HCT116 (cell line): ENCODE measurements at regions of chr1 and their contacts with region 1.

Region 1: GRCh38 chr1:108559215-108560186 is at the start of gene EEIG2:
- DNase-seq: peak; percentile 69
- ATAC-seq: peak; percentile 83
- H3K4me3 ChIP-seq: peak within 1 kb of the TSS; percentile 64 to 70
- H3K27ac ChIP-seq: peak within 1 kb of the TSS; percentile 48; the same call in 1 of the 2 replicates
- H3K4me1 ChIP-seq: peaks cover 11 to 23% of the 10 kb centered on the region in 2 experiments
- H3K27me3 ChIP-seq: no peaks in the 10 kb centered on the region
- CTCF ChIP-seq: peak; percentile 32 to 63 (median 62); a peak in 5 of 6 replicates
- POLR2A ChIP-seq: no peak
- RAD21 ChIP-seq: no peak
- total RNA-seq, gene EEIG2: 16.0 TPM

Region 2: DNA sequence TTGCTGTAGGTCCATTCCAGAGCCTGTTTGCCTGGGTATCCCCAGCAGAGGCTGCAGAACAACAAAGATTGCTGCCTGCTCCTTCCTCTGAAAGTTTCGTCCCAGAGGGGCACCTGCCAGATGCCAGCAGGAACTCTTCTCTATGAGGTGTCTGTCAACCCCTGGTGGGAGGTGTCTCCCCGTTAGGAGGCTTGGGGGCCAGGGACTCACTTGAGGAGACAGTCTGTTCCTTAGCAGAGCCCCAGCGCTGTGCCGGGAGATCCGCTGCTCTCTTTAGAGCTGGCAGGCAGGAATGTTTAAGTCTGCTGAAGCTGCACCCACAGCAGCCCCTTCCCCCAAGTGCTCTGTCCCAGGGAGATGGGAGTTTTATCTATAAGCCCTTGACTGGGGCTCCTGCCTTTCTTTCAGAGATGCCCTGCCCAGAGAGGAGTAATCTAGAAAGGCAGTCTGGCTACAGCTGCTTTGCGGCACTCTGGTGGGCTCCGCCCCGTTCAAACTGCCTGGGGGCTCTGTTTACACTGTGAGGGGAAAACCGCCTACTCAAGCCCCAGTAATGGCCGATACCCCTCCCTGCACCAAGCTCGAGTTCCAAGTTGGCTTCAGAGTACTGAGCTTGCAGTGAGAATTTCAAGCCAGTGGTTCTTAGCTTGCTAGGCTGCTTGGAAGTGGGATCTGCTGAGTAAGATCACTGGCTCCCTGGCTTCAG is 350.6 kb before region 1 on chr1:
- CTCF ChIA-PET with region 1: no interaction called
- POLR2A ChIA-PET with region 1: no interaction called
- RAD21 ChIA-PET with region 1: no interaction called
- intact Hi-C with region 1: loop called (anchors 5 kb)
- DNase-seq: no peak
- ATAC-seq: no peak
- H3K4me3 ChIP-seq: no peak overlapping the region
- H3K27ac ChIP-seq: no peak overlapping the region
- H3K4me1 ChIP-seq: no peaks in the 10 kb centered on the region
- H3K27me3 ChIP-seq: peaks cover 9% of the 10 kb centered on the region; the same call in 1 of the 2 replicates
- CTCF ChIP-seq: no peak
- POLR2A ChIP-seq: no peak
- RAD21 ChIP-seq: no peak

Region 3: GRCh38 chr1:108575375-108575774 is 15.9 kb after region 1 on chr1:
- CTCF ChIA-PET with region 1: interaction called, 13 read pairs
- POLR2A ChIA-PET with region 1: no interaction called
- RAD21 ChIA-PET with region 1: no interaction called
- intact Hi-C with region 1: no loop called
- DNase-seq: no peak
- ATAC-seq: no peak
- H3K4me3 ChIP-seq: no peak overlapping the region
- H3K27ac ChIP-seq: no peak overlapping the region
- H3K4me1 ChIP-seq: no peaks in the 10 kb centered on the region; a peak in 1 of 4 replicates
- H3K27me3 ChIP-seq: no peaks in the 10 kb centered on the region
- CTCF ChIP-seq: no peak
- POLR2A ChIP-seq: no peak
- RAD21 ChIP-seq: no peak